ENCODE measurements at regions of chr6 and their contacts with region 1.

Region 1: GRCh38 chr6:111793711-111794111 is 79.5 kb downstream of the FYN start:
- DNase-seq: peak; percentile 77
- ATAC-seq: peak; percentile 81
- H3K4me3 Mint-ChIP-seq: peak overlapping the region; percentile 82
- H3K27ac Mint-ChIP-seq: peak overlapping the region; percentile 95
- H3K4me1 Mint-ChIP-seq: peaks cover 71% of the 10 kb centered on the region
- H3K27me3 Mint-ChIP-seq: no peaks in the 10 kb centered on the region

Region 2: DNA sequence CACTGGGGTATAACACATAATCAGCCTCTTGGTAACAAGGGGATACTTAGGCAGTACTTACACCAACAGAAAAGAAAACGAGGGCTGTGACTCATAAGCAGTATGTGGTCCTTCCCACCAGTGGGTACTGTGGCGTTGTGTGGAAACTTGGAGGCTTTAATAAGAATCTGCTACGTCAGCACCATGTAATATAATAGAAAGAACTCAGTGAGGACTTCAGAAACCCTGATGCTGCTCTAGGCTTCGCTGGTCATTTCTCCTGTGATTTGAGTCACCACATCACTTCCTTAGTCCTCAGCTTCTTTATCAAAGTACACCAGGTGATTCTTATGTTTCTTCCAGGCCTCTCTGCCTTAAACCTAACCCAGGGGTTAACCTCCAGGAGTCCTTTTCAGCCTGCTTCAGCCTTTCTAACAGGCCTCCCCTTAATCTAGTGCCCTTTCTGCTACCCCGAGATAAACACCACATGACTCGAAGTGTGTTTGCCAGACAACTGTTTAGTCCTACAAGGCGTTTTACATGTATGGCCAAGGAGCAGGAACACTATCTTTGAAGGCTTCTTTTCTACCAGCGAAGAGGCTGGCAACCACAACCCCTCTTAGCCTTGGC is 11.0 kb after region 1 on chr6:
- CTCF ChIA-PET with region 1: interaction called, 4 read pairs
- POLR2A ChIA-PET with region 1: interaction called, 20 read pairs
- DNase-seq: peak; percentile 89
- ATAC-seq: peak; percentile 78
- H3K4me3 Mint-ChIP-seq: peak overlapping the region; percentile 56
- H3K27ac Mint-ChIP-seq: peak overlapping the region; percentile 99
- H3K4me1 Mint-ChIP-seq: peaks cover 90% of the 10 kb centered on the region
- H3K27me3 Mint-ChIP-seq: no peaks in the 10 kb centered on the region